Caco-2 (cell line): ENCODE measurements at regions of chr1 and their contacts with region 1.

Region 1: DNA sequence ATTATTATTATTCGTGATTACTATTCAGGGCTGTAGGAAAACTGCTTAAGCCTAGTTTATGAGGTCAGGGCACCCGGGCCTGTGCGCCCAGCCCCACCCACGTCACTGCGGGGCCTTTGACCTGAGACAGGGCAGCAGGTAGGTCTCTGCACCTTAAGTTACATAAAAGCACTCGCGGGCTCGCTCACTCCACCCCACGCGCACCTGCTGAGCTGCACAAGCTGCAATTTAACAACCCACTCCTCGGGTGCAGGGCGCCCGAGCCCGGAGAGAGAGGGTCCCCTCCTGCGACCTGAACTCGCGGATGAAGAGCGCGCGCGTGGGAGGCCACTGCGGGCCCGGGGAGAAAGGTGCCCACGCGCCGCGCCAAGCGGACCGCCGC is 477 bp downstream of the ICMT start:
- DNase-seq: peak in 1 of 2 experiments; percentile 32
- H3K4me3 ChIP-seq: peak overlapping the region; percentile 58
- H3K4me3 Mint-ChIP-seq: peak overlapping the region; percentile 74
- H3K27ac Mint-ChIP-seq: peak overlapping the region; percentile 69
- H3K4me1 ChIP-seq: 0 out of 2 replicates have a peak, but pooled peaks cover 12% of the 10 kb centered on the region
- H3K4me1 Mint-ChIP-seq: no peaks in the 10 kb centered on the region
- H3K27me3 ChIP-seq: no peaks in the 10 kb centered on the region
- H3K27me3 Mint-ChIP-seq: no peaks in the 10 kb centered on the region
- CTCF ChIP-seq: no peak

Region 2: DNA sequence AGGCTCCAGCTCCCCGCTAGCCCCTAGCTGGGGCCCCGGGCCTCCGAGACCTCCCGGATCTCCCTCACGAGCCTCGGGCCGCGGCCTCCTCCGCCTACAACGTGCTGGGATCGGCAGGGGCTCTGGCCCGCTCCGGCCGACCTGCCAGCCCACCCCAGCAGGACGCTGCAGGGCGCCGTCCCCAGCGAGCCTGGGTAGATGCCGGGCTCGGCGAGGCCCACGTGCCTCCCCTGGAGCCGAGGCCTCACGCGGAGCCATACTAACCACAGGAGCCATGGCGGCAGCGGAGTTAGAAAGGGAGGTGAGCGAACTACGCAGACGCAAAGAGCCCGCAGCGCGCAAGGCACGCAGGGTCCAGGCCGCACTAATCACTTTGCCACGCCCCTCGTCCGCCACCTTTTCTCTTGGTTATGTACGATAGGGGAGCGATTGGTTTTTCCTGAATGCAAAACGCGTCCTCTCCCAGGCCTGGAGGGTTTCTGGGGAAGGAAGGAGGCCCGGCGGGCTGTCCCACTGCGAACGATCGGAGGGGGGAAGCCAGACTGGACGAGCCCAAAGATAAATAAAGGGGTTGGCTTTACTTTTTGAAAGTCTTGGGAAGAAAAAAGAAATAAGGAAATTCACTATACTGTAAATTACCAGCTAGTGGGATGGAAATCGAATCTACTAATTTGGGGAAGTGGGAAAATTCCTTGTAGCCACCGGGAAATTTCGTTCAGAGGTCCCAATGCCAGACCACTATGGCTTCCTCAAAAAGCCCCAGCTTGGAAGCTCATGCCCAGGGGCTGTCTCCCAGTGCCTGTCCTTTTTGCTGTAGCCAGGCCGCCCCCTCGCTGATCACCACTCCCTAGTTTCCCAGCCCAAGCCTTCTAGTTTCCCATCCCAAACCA is 35.7 kb before region 1 on chr1 and contains the start of gene RPL22:
- CTCF ChIA-PET with region 1: interaction called, 3 read pairs
- POLR2A ChIA-PET with region 1: interaction called, 5 read pairs
- intact Hi-C with region 1: loop called (anchors 5 kb)
- DNase-seq: peak; percentile 95 to 98
- H3K4me3 ChIP-seq: peak within 1 kb of the TSS; percentile 87
- H3K4me3 Mint-ChIP-seq: peak within 1 kb of the TSS; percentile 83
- H3K27ac Mint-ChIP-seq: peak within 1 kb of the TSS; percentile 95
- H3K4me1 ChIP-seq: peaks cover 14% of the 10 kb centered on the region
- H3K4me1 Mint-ChIP-seq: peaks cover 18% of the 10 kb centered on the region
- H3K27me3 ChIP-seq: no peaks in the 10 kb centered on the region
- H3K27me3 Mint-ChIP-seq: no peaks in the 10 kb centered on the region
- CTCF ChIP-seq: no peak
- total RNA-seq, gene RPL22: 406 and 418 TPM in 2 replicates

Region 3: DNA sequence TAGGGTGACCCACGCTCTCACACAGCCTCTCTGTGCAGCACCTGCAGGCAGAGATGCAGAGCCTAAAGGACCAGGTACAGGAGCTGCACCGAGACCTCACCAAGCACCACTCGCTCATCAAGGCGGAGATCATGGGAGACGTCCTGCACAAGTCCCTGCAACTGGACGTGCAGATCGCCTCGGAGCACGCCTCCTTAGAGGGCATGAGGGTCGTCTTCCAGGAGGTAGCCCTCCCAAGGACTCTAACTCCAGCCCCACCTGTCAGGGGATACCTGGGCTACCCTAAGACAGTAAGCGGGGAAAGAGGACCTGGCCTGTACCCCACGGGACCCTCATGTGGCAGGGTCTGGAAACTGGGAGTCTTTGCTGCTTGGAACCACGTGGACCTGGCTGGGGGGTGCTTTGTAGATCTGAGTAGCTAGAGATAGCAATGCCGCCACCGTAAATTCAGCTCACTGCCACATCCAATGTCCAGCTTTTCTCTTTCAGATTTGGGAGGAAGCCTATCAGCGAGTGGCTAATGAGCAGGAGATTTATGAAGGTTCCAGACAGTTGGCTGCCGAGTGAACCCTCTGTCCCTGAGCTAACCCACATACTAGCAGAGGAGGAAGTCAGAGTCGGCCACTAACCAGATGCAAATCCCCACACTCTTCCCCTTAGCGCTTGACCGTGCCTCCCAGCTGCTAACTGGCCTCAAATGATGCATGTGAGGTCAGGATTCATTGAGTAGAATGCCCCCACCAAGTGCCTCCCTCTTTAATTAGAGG is 22.9 kb before region 1 on chr1:
- CTCF ChIA-PET with region 1: no interaction called
- POLR2A ChIA-PET with region 1: no interaction called
- intact Hi-C with region 1: no loop called
- DNase-seq: no peak
- H3K4me3 ChIP-seq: no peak overlapping the region
- H3K4me3 Mint-ChIP-seq: no peak overlapping the region
- H3K27ac Mint-ChIP-seq: peak overlapping the region; percentile 39
- H3K4me1 ChIP-seq: no peaks in the 10 kb centered on the region
- H3K4me1 Mint-ChIP-seq: no peaks in the 10 kb centered on the region
- H3K27me3 ChIP-seq: no peaks in the 10 kb centered on the region
- H3K27me3 Mint-ChIP-seq: no peaks in the 10 kb centered on the region
- CTCF ChIP-seq: no peak